Uterus (tissue), 4 donors: ENCODE measurements at regions of chr10 and their contacts with region 1.

Region 1: DNA sequence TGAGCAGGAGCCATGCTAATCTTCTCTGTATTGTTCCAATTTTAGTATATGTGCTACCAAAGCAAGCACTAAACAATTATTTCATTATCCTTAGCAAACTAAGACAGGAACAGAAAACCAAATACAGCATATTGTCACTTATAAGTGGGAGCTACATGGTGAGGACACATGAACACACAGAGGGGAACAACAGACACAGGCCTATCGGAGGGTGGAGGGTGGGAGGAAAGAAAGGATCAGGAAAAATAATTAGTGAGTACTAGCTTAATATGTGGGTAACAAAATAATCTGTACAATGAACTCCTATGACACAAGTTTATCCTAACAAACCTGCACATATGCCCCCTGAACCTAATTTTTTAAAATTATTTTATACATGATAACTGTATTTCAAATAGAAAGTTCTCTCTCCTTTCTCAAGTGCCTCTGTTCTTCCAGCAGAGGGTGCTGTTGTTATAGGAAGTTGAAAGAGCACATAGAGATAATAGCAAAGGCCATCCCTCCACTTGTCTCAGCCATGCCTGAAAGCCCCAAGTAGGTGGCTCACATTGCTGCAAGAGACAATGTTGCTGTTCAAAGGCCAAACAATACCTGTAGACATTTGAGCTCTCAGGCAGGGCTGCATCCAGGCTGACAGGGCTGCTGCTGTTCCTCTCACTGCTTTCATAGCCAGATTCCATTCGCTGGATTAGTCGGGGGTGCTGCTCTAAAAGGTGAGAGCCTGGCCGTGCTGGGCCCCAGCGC is 33.4 kb upstream of the PPP3CB start:
- DNase-seq: peak; percentile 29 to 67
- H3K4me3 ChIP-seq: no peak overlapping the region
- H3K27ac ChIP-seq: no peak overlapping the region
- H3K4me1 ChIP-seq: no peaks in the 10 kb centered on the region
- H3K27me3 ChIP-seq: no peaks in the 10 kb centered on the region
- CTCF ChIP-seq: peak; percentile 81 to 92 (median 90)
- POLR2A ChIP-seq: no peak

Region 2: GRCh38 chr10:73424516-73424915 is 104.7 kb before region 1 on chr10:
- intact Hi-C with region 1: no loop called
- DNase-seq: no peak
- H3K4me3 ChIP-seq: no peak overlapping the region
- H3K27ac ChIP-seq: no peak overlapping the region
- H3K4me1 ChIP-seq: no peaks in the 10 kb centered on the region
- H3K27me3 ChIP-seq: no peaks in the 10 kb centered on the region
- CTCF ChIP-seq: no peak
- POLR2A ChIP-seq: no peak

Region 3: GRCh38 chr10:73644015-73644743 is 114.9 kb after region 1 on chr10:
- intact Hi-C with region 1: loop called (anchors 5 kb)
- DNase-seq: peak; percentile 59 to 67
- H3K4me3 ChIP-seq: no peak overlapping the region
- H3K27ac ChIP-seq: no peak overlapping the region
- H3K4me1 ChIP-seq: no peaks in the 10 kb centered on the region
- H3K27me3 ChIP-seq: no peaks in the 10 kb centered on the region
- CTCF ChIP-seq: peak; percentile 74 to 97 (median 91)
- POLR2A ChIP-seq: no peak